ENCODE measurements at regions of chr5 and their contacts with region 1.

Region 1: DNA sequence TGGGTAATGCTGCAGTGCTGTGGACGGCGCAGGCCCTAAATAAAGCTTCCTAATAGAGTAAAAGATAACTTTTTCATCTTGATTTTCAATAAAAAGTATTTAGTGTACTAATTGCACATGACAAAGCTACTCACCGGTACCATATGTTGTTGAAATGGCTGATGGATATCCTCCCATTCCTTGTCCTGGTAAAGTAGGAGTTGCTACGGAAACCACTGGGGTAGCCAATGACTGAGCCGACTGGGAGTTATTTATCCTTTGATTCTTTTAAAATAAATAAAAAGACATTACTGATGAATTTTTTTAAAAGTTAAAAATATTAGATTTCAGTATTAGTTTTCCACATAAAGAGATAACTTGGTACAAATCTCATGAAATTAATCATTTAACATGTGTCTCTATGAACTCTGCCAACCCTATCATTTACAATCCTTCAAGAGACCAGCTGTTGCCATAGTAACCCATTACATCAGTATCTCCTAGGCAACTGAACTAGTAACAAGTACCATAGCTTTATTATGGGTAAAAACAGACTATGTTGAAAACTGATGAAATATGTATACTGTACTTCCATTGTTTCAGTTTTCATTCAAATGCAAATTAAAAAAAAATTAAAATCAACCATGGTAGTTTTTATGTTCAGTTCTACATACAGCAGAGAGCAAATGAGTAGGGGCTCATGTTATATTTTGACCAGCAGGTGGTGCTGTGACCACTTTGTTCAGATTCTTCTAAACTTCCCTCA is 153.7 kb downstream of the MEF2C start:
- DNase-seq: peak in 31 of 35 experiments; percentile 9 to 79 (median 34)
- ATAC-seq: peak; percentile 54 to 79 (median 59)
- H3K4me3 ChIP-seq: no peak overlapping the region
- H3K4me3 Mint-ChIP-seq: no peak overlapping the region
- H3K27ac ChIP-seq: no peak overlapping the region
- H3K27ac Mint-ChIP-seq: no peak overlapping the region
- H3K4me1 ChIP-seq: peaks cover 0 to 2% of the 10 kb centered on the region in 2 experiments
- H3K4me1 Mint-ChIP-seq: peaks cover 4 to 7% (median 5%) of the 10 kb centered on the region in 3 donors
- H3K27me3 ChIP-seq: no peaks in the 10 kb centered on the region
- H3K27me3 Mint-ChIP-seq: peaks cover 4 to 9% of the 10 kb centered on the region in 2 donors

Region 2: GRCh38 chr5:87780831-87781760 is 948.2 kb before region 1 on chr5:
- CTCF ChIA-PET with region 1: interaction called, 5 to 11 read pairs
- POLR2A ChIA-PET with region 1: interaction called in 1 of 2 experiments, 3 read pairs
- DNase-seq: peak; percentile 33 to 89 (median 70)
- ATAC-seq: peak; percentile 85 to 99 (median 92)
- H3K4me3 ChIP-seq: no peak overlapping the region
- H3K4me3 Mint-ChIP-seq: no peak overlapping the region
- H3K27ac ChIP-seq: no peak overlapping the region
- H3K27ac Mint-ChIP-seq: no peak overlapping the region
- H3K4me1 ChIP-seq: no peaks in the 10 kb centered on the region
- H3K4me1 Mint-ChIP-seq: peaks cover 0 to 3% (median 3%) of the 10 kb centered on the region in 3 donors
- H3K27me3 ChIP-seq: peaks cover 0 to 8% of the 10 kb centered on the region in 2 experiments
- H3K27me3 Mint-ChIP-seq: peaks cover 25 to 43% of the 10 kb centered on the region in 2 donors

Region 3: DNA sequence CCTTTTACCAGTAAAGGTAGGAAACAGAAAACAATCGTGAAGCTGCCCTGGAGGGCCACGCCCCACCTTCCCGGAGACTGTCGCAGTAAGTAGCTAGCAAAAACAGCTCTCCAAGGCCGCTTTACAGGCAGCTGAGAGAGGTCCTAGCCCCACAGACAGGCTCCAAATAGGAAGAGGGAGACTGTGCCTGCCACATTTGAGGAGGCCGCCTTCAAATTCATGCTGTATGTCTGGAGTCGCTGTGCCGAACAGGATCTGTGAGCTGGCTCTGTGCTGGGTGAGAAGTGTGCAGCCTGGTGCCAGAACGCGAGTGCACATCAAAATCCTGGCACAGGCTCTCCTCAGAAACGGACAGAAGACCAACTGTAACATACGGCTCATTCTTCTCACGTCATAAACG is 1098.1 kb after region 1 on chr5:
- CTCF ChIA-PET with region 1: no interaction called
- POLR2A ChIA-PET with region 1: no interaction called
- DNase-seq: no peak
- ATAC-seq: no peak
- H3K4me3 ChIP-seq: no peak overlapping the region
- H3K4me3 Mint-ChIP-seq: no peak overlapping the region
- H3K27ac ChIP-seq: no peak overlapping the region
- H3K27ac Mint-ChIP-seq: no peak overlapping the region
- H3K4me1 ChIP-seq: no peaks in the 10 kb centered on the region
- H3K4me1 Mint-ChIP-seq: no peaks in the 10 kb centered on the region
- H3K27me3 ChIP-seq: no peaks in the 10 kb centered on the region
- H3K27me3 Mint-ChIP-seq: no peaks in the 10 kb centered on the region

Region 4: GRCh38 chr5:90264689-90265544 is 1535.7 kb after region 1 on chr5:
- CTCF ChIA-PET with region 1: interaction called, 19 to 40 read pairs
- POLR2A ChIA-PET with region 1: no interaction called
- DNase-seq: peak in 30 of 35 experiments; percentile 1 to 62 (median 16)
- ATAC-seq: peak in 1 of 4 experiments; percentile 43
- H3K4me3 ChIP-seq: no peak overlapping the region
- H3K4me3 Mint-ChIP-seq: no peak overlapping the region
- H3K27ac ChIP-seq: no peak overlapping the region
- H3K27ac Mint-ChIP-seq: no peak overlapping the region
- H3K4me1 ChIP-seq: no peaks in the 10 kb centered on the region
- H3K4me1 Mint-ChIP-seq: peaks cover 0 to 4% (median 0%) of the 10 kb centered on the region in 3 donors
- H3K27me3 ChIP-seq: no peaks in the 10 kb centered on the region
- H3K27me3 Mint-ChIP-seq: peaks cover 0 to 3% of the 10 kb centered on the region in 2 donors